ENCODE measurements at regions of chr3 and their contacts with region 1.

Region 1: GRCh38 chr3:194134757-194135528 is 1.0 kb upstream of the HES1 start:
- DNase-seq: peak; percentile 95 to 97 (median 97)
- ATAC-seq: peak; percentile 79 to 80
- H3K4me3 ChIP-seq: peak overlapping the region; percentile 70
- H3K27ac ChIP-seq: peak overlapping the region; percentile 96
- H3K4me1 ChIP-seq: peaks cover 4% of the 10 kb centered on the region
- H3K27me3 ChIP-seq: no peaks in the 10 kb centered on the region

Region 2: DNA sequence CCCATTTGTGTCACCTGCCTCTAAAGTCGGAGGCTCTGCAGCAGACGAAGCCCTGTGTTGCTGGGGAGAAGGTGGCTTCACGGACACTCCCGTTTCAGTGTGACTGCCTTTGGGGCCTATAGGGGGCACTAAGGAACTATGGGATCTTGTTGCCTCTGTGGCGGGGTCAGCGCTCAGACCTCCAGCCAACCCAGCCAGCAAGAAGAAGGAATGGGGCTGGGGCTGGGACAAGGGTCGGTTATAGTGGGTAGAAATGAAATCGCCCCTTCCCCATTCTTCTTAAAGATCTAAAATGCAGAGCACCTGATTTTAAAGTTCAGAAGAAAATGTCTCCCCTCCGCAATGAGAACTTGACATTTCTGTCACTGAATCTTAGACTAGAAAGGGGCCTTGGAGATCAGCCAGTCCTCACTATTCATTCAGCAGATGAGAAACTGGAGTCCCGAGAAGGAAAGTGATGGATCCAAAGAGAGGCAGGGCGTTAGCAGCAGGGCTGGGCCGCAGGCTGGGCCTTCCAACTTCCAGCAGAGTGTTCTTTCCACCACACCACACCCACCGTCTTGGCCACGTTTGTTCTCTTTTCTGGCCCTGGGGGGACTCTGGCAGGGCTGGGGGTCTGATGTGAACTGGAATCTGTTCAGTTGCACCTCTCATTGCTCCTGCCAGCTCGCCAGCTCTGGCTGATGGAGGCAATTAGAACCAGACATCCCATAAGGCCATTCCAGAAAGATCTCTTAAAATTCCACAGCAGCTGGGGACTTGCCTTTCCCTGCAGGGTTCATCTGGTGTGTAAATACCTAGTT is 346.6 kb before region 1 on chr3:
- intact Hi-C with region 1: loop called (anchors 5 to 10 kb)
- DNase-seq: peak; percentile 73 to 89 (median 81)
- ATAC-seq: peak; percentile 93
- H3K4me3 ChIP-seq: no peak overlapping the region
- H3K27ac ChIP-seq: peak overlapping the region; percentile 2
- H3K4me1 ChIP-seq: peaks cover 3% of the 10 kb centered on the region
- H3K27me3 ChIP-seq: no peaks in the 10 kb centered on the region

Region 3: DNA sequence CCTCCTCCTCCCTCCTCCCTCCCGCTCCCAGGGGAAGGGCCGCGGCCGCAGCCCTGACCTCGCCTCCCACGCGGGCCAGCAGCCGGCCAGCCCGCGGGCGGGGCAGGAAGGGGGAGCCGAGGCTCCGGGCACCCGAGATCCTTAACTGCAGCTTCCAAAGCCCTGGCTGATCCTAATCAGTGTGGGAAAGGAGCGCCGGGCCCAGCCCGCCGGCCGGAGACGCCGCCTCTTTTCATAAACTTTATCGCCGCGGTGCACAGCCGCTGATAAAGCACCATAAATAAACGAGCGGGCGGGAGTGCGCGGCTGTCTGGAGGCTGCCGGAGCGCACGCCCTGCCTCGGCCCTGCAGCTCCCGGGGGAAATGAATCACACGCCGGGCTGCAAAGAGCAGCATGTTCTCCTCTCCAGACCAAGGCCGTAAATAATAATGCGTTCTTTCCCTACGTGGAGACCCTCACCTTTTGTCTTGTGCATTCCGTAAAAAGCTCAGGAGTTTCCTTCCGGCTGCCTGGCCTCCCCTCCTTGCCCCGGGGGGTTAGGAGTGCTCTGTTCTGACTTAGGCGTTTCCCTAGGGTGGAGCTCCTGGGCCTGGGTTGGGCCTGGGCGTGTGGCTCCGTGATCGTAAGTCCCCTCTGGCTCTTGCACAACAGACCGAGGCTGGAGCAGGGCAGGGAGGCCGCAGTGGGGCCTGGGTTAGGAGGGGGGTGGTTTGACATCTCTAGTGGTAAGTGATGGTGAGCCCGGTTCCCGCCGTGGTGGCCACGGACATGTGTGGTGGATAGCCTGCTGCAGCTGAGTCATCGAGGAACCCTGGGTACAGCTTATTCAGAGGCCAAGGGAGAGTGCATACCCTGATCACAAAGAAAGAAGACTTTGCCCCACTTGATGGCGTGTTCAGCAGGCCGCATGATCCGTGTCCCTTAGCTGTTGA is 131.6 kb before region 1 on chr3:
- intact Hi-C with region 1: loop called (anchors 5 to 10 kb)
- DNase-seq: peak; percentile 94 to 97 (median 96)
- ATAC-seq: peak; percentile 94
- H3K4me3 ChIP-seq: peak overlapping the region; percentile 31
- H3K27ac ChIP-seq: peak overlapping the region; percentile 83
- H3K4me1 ChIP-seq: peaks cover 5% of the 10 kb centered on the region
- H3K27me3 ChIP-seq: no peaks in the 10 kb centered on the region

Region 4: DNA sequence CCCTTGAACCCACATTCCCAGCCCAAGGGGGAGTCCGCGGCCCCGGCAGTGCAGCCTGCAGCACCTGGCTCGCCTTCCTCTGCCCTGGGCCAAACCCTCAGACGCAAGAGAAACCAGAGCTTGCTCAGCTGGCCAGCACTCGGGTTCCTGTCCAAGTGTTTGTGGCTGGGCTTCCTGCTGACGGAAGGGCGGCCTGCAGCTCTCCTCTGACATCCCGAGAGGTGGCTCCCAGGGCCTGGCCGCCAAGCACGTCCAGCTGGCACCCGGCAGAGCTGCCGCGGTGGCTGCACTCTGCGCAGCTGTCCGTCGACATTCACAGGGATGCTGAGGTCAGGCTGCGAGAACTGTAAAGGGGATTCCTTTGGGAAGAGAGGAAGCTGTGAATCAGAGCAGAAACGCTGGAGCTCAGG is 130.5 kb after region 1 on chr3:
- intact Hi-C with region 1: loop called in 3 of 4 experiments (anchors 2 to 5 kb)
- DNase-seq: peak; percentile 96 to 97 (median 97)
- ATAC-seq: peak; percentile 83 to 84
- H3K4me3 ChIP-seq: no peak overlapping the region
- H3K27ac ChIP-seq: peak overlapping the region; percentile 82
- H3K4me1 ChIP-seq: peaks cover 11% of the 10 kb centered on the region
- H3K27me3 ChIP-seq: no peaks in the 10 kb centered on the region

Measured in right cardiac atrium (tissue), 5 donors.